PC-9 (cell line): ENCODE measurements at regions of chr19 and their contacts with region 1.

Region 1: DNA sequence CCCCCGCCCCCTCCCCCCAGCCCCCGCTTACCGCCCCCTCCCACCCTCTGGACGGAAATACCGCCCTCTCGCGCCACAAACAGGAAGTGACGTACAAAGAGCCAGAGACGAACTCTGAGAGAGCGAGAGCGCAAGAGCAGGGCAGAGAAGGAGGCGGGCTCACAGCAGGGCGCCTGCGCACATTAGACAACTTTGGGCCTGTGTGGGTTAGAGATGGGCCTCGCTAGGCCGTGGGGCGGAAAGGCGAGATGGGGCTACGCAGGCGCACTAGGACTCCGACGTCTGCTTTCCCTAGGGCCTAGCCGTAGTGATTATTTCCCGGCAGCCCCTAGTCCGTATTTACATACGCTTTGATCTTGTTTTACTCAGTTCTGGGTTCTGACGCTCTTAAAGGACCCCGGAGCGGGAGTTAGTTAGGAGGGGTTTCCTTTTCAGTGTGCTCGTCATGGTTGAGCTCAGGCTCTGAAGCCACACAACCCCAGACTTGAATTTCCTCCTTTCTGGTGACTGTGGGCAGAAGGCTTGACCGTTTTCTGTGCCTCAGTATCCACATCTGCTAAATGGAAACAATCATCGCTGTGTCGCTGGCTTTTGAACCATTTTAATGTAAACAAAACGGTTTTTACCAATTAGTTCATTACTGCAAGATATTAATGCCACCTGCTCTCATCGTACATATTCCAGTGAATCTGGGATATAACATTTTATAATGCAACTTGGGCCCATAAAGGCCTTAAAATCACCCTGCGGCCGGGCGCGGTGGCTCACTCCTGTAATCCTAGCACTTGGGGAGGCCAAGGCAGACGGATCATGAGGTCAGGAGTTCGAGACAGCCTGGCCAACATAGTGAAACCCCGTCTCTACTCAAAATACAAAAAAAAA is 449 bp upstream of the AKT2 start:
- DNase-seq: peak; percentile 97 to 98
- H3K4me3 ChIP-seq: peak overlapping the region; percentile 53
- H3K27ac ChIP-seq: peak overlapping the region; percentile 83
- H3K4me1 ChIP-seq: peaks cover 17% of the 10 kb centered on the region; the same call in 1 of the 2 replicates
- H3K27me3 ChIP-seq: no peaks in the 10 kb centered on the region
- CTCF ChIP-seq: no peak

Region 2: DNA sequence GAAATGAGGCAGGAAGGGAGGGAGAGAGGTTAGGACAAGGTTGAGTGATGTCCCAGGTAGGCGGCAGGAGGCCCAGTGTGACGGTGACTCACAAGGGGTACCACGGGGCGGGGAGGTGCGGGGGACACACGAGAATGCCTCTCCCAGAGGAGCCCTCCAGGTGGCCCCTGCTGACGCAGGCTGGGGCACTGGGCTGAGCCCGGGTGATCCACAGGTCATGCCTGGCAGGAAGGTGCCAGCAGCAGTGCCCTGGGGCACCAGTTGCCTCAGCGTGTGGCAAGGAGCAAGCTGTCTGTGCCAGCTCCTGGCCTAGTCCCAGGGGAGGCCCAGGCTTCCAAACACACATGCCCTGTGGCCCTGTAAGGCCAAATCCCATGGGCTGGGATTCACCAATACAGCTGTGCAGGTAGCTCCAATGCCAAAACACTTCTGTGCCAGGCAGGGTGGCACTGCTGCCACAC is 28.5 kb before region 1 on chr19:
- CTCF ChIA-PET with region 1: no interaction called
- POLR2A ChIA-PET with region 1: no interaction called
- intact Hi-C with region 1: loop called (anchors 1 kb)
- DNase-seq: peak; percentile 91 to 96
- H3K4me3 ChIP-seq: no peak overlapping the region
- H3K27ac ChIP-seq: peak overlapping the region; percentile 57
- H3K4me1 ChIP-seq: peaks cover 21% of the 10 kb centered on the region
- H3K27me3 ChIP-seq: no peaks in the 10 kb centered on the region
- CTCF ChIP-seq: no peak